Activated T-helper 1 cell treated with anti-CD3 and anti-CD28 coated beads, Interleukin-12 subunit alpha, Interleukin-12 subunit beta, Interleukin-2, Interleukin-4 antibody, amounts not matched to agents 30 ng/mL and 10 ng/mL and 1 ng/mL, durations not matched to agents 14 hours and 24 hours and 36 hours (primary cell): ENCODE measurements at regions of chr15 and their contacts with region 1.

Region 1: DNA sequence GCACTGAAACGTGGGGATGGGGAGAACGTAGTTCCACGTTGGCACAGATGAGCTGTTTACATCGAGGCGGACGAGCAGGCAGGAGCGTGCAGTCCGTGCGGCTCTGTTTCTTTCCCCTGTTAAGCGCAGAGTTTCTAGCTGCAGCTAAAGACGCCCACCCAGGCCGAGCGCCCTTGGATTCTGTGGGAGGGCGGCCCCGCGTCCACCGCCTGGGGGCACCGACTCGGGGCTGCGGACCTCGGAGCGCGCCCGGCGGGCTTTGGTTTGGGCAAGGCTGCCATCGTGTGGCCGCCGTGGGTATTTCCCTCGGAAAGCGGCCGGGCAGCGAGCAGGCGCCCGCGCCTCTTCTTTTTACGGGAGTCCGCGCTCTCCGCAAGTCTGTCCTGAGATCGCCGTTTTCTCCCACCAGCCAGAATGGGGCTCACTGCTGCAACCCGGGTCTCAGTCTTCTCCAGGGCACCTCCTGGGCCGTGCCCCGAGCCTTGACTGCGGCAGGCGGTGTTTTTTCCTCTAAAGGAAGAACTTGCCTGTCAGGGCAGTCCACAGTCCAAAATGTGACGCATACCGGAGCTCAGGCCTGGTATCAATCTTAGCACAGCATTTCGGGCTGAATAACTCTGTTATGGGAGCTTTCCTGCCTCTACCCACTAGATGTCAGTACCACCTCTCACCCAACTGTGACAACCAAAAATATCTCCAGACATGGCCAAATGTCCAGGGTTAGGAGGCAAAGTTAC is 219.9 kb upstream of the IGF1R start:
- DNase-seq: peak; percentile 53
- H3K4me3 Mint-ChIP-seq: peak overlapping the region; percentile 19
- H3K27ac Mint-ChIP-seq: no peak overlapping the region
- H3K4me1 Mint-ChIP-seq: no peaks in the 10 kb centered on the region
- H3K27me3 Mint-ChIP-seq: peaks cover 28% of the 10 kb centered on the region

Region 2: DNA sequence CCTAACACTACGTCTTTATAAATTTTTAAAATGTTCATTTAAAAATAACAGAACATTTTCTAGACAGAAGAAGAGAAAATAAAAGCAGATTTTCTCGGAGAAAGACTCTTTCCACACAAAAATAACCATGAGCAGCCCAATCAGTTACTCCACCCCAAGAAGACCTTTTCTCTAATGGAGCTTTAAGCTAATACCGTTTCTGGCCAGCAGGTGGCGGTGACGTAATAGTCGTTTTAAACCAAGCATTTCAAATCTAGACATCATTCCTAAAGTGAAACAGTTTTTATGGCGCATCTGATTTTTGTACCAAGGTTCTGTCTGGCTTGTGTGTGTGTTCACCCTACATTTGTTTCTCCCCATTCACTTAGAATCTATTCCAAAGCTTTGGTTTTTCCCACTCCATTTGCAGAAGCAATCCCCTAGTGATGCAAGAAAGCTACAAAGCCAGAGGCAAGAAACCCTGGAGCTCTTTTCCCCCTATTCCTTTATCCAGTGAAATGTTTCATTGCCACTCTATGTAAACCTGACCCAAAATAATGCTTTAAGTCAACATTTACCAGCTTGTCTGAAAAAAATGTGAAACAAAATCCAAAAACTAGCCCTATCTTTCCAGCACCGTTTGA is 116.7 kb before region 1 on chr15:
- intact Hi-C with region 1: loop called (anchors 1 kb)
- DNase-seq: peak; percentile 56
- H3K4me3 Mint-ChIP-seq: no peak overlapping the region
- H3K27ac Mint-ChIP-seq: no peak overlapping the region
- H3K4me1 Mint-ChIP-seq: no peaks in the 10 kb centered on the region
- H3K27me3 Mint-ChIP-seq: peaks cover 4% of the 10 kb centered on the region